ENCODE measurements at regions of chr1 and their contacts with region 1.

Region 1: GRCh38 chr1:164637461-164638375 is 78.7 kb downstream of the PBX1 start:
- DNase-seq: peak in 1 of 2 donors; percentile 48
- ATAC-seq: peak; percentile 18 to 21
- H3K4me3 ChIP-seq: no peak overlapping the region
- H3K27ac ChIP-seq: peak overlapping the region; percentile 84 to 92 (median 90)
- H3K4me1 ChIP-seq: peaks cover 97 to 100% of the 10 kb centered on the region in 2 donors
- H3K27me3 ChIP-seq: no peaks in the 10 kb centered on the region
- CTCF ChIP-seq: no peak
- POLR2A ChIP-seq: no peak

Region 2: GRCh38 chr1:164617377-164618201 is 20.1 kb before region 1 on chr1:
- in situ Hi-C with region 1: no loop called
- intact Hi-C with region 1: loop called (anchors 2 kb)
- DNase-seq: no peak
- ATAC-seq: no peak
- H3K4me3 ChIP-seq: no peak overlapping the region
- H3K27ac ChIP-seq: peak overlapping the region; percentile 9 to 84 (median 63)
- H3K4me1 ChIP-seq: peaks cover 61 to 71% of the 10 kb centered on the region in 2 donors
- H3K27me3 ChIP-seq: no peaks in the 10 kb centered on the region
- CTCF ChIP-seq: peak in 3 of 5 experiments; percentile 41 to 53 (median 53)
- POLR2A ChIP-seq: no peak

Region 3: GRCh38 chr1:164673584-164674214 is 36.0 kb after region 1 on chr1:
- in situ Hi-C with region 1: no loop called
- intact Hi-C with region 1: loop called (anchors 2 kb)
- DNase-seq: peak; percentile 90 to 93
- ATAC-seq: peak; percentile 96 to 97
- H3K4me3 ChIP-seq: no peak overlapping the region
- H3K27ac ChIP-seq: peak overlapping the region; percentile 76 to 92 (median 80)
- H3K4me1 ChIP-seq: peaks cover 46 to 50% of the 10 kb centered on the region in 2 donors
- H3K27me3 ChIP-seq: no peaks in the 10 kb centered on the region
- CTCF ChIP-seq: peak; percentile 57 to 93 (median 87)
- POLR2A ChIP-seq: peak; percentile 24 to 49

Region 4: DNA sequence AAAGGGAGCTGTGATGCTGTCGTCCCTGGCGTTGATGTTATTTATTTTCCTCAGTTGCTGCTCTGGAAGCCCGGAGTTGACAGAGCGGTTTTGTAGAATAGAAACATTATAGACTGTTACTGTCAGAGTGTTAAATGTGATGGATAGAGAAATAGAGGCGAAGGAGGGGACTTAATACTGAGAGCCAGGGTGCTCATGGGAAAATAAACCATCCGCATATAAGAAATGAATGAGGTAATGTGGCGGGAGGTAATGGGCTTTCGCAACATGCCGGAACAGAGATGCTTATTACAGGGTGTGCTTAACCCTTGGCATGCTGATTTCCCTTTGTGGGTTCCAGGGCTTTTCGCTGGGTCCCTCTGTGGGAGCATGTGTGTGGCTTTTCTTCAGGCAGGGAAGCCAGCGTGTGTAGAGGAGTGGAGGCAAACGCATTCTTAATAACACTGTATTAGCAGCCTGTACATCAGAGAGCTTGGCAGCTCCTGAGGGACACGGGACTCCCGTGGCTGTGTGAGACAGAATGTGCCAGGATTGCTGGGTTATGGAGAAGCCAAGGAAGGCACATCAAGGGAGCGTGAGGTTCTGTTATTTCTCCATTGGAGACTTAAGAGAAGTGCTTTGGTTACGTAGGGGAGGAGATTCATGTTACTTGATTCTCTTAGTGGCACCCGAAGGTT is 62.2 kb after region 1 on chr1:
- in situ Hi-C with region 1: no loop called
- intact Hi-C with region 1: loop called (anchors 2 kb)
- DNase-seq: peak; percentile 84 to 88
- ATAC-seq: peak; percentile 80 to 86
- H3K4me3 ChIP-seq: peak overlapping the region; percentile 29 to 51 (median 41)
- H3K27ac ChIP-seq: peak overlapping the region; percentile 81 to 88 (median 86)
- H3K4me1 ChIP-seq: peaks cover 19 to 64% of the 10 kb centered on the region in 2 donors
- H3K27me3 ChIP-seq: no peaks in the 10 kb centered on the region
- CTCF ChIP-seq: no peak
- POLR2A ChIP-seq: peak; percentile 56 to 64

Region 5: GRCh38 chr1:164780863-164781262 is 143.1 kb after region 1 on chr1:
- in situ Hi-C with region 1: loop called in 1 of 4 experiments (anchors 10 kb)
- intact Hi-C with region 1: loop called (anchors 2 kb)
- DNase-seq: peak; percentile 88 to 91
- ATAC-seq: peak; percentile 93 to 97
- H3K4me3 ChIP-seq: no peak overlapping the region
- H3K27ac ChIP-seq: peak overlapping the region; percentile 86 to 93 (median 90)
- H3K4me1 ChIP-seq: peaks cover 54 to 60% of the 10 kb centered on the region in 2 donors
- H3K27me3 ChIP-seq: no peaks in the 10 kb centered on the region
- CTCF ChIP-seq: no peak
- POLR2A ChIP-seq: peak; percentile 69 to 85